Colonic mucosa (tissue), 4 donors: ENCODE measurements at regions of chr11 and their contacts with region 1.

Region 1: DNA sequence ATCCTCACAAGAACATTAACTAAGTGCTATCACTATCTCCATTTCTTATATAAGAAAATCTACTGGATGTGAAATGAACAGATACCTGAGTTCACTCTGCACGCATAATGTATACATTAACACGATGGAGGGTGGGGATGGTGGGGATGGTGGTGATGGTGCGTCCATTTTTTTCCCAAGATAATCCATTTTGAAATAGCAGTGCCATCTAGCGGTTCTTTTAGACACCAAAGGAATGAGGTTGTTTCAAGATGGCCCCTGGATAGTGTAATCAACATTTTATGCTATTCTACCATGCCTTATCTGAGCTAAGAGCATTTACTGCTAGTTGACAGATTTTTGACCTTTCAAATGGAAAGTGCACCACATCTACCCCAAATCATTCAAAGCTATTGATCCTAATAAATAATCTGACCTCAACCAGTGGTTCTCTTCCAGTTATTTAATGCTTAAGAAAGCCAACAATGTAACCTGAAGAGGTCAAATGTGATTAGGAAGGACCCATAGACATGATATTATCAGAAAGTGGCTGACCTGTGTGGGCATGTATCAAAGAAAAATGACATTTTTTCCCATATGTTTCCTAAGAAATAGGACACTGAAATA is 714.7 kb upstream of the TENM4 start:
- DNase-seq: no peak
- H3K4me3 ChIP-seq: no peak overlapping the region
- H3K27ac ChIP-seq: no peak overlapping the region
- H3K4me1 ChIP-seq: no peaks in the 10 kb centered on the region
- H3K27me3 ChIP-seq: no peaks in the 10 kb centered on the region
- CTCF ChIP-seq: peak; percentile 42

Region 2: DNA sequence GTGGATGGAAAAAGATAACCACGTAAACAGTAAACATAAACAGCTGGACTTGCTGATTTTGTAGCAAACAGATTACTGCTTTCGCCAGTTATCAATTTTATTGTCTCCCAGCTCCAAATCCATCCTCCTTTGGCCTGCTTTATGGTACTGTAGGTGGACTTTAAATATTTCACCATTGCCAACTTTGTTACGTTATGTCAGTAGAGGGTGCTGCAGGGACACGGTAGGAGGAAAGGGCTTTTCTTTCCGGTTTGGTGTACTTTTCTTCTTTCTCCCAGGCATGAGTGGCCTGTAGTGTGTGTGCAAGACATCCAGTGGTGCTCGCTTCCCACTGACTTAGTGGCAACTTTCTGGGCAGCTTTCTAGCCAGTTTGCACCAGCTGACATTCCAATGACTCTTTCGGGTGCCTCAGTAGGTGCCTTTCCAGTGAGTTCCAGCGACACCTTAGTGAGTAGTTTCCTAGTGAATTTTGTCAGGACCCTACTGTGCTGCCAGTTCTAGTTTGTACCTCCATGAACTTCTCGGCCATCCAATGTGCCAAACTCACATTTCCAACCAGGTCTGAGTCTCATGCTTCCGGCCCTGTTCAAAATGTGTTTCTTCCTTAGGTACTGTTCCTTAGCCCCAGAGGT is 447.1 kb before region 1 on chr11:
- intact Hi-C with region 1: loop called (anchors 5 kb)
- DNase-seq: peak; percentile 26
- H3K4me3 ChIP-seq: no peak overlapping the region
- H3K27ac ChIP-seq: no peak overlapping the region
- H3K4me1 ChIP-seq: no peaks in the 10 kb centered on the region
- H3K27me3 ChIP-seq: no peaks in the 10 kb centered on the region
- CTCF ChIP-seq: peak; percentile 35

Region 3: GRCh38 chr11:79762279-79762921 is 393.1 kb before region 1 on chr11:
- intact Hi-C with region 1: loop called (anchors 10 kb)
- DNase-seq: no peak
- H3K4me3 ChIP-seq: no peak overlapping the region
- H3K27ac ChIP-seq: no peak overlapping the region
- H3K4me1 ChIP-seq: no peaks in the 10 kb centered on the region
- H3K27me3 ChIP-seq: no peaks in the 10 kb centered on the region
- CTCF ChIP-seq: no peak